SK-N-SH (cell line): ENCODE measurements at regions of chr7 and their contacts with region 1.

Region 1: GRCh38 chr7:24381894-24382505 is 98.0 kb downstream of the NPY start:
- DNase-seq: peak; percentile 74
- H3K4me3 ChIP-seq: no peak overlapping the region
- H3K27ac ChIP-seq: peak overlapping the region in 1 of 2 experiments; percentile 59; a peak in 1 of 4 replicates
- H3K4me1 ChIP-seq: peaks cover 0 to 3% of the 10 kb centered on the region in 2 experiments; a peak in 1 of 4 replicates
- H3K27me3 ChIP-seq: no peaks in the 10 kb centered on the region
- CTCF ChIP-seq: peak; percentile 65
- EP300 ChIP-seq: no peak
- RAD21 ChIP-seq: peak; percentile 95

Region 2: GRCh38 chr7:23893942-23894891 is 487.8 kb before region 1 on chr7:
- CTCF ChIA-PET with region 1: interaction called, 16 read pairs
- POLR2A ChIA-PET with region 1: no interaction called
- DNase-seq: peak; percentile 44
- H3K4me3 ChIP-seq: 0 out of 4 replicates have a peak overlapping the region, but pooled peaks of 1 of the 2 experiments have one; percentile 7
- H3K27ac ChIP-seq: peak overlapping the region; percentile 63 to 82
- H3K4me1 ChIP-seq: peaks cover 23 to 35% of the 10 kb centered on the region in 2 experiments
- H3K27me3 ChIP-seq: no peaks in the 10 kb centered on the region
- CTCF ChIP-seq: no peak
- EP300 ChIP-seq: 0 out of 4 replicates have a peak, but pooled peaks of 1 of the 2 experiments have one; percentile 24
- RAD21 ChIP-seq: no peak

Region 3: GRCh38 chr7:24199978-24200377 is 182.0 kb before region 1 on chr7:
- CTCF ChIA-PET with region 1: interaction called, 20 read pairs
- POLR2A ChIA-PET with region 1: no interaction called
- DNase-seq: peak; percentile 56
- H3K4me3 ChIP-seq: no peak overlapping the region; a peak in 1 of 4 replicates
- H3K27ac ChIP-seq: peak overlapping the region in 1 of 2 experiments; percentile 95; a peak in 2 of 4 replicates
- H3K4me1 ChIP-seq: peaks cover 0 to 44% of the 10 kb centered on the region in 2 experiments; a peak in 3 of 4 replicates
- H3K27me3 ChIP-seq: no peaks in the 10 kb centered on the region
- CTCF ChIP-seq: no peak
- EP300 ChIP-seq: peak; percentile 40 to 98; a peak in 3 of 4 replicates
- RAD21 ChIP-seq: peak; percentile 42

Region 4: GRCh38 chr7:24290004-24290641 is 91.9 kb before region 1 on chr7:
- CTCF ChIA-PET with region 1: interaction called, 42 read pairs
- POLR2A ChIA-PET with region 1: no interaction called
- DNase-seq: peak; percentile 69
- H3K4me3 ChIP-seq: no peak overlapping the region
- H3K27ac ChIP-seq: no peak overlapping the region
- H3K4me1 ChIP-seq: peaks cover 0 to 5% of the 10 kb centered on the region in 2 experiments; a peak in 2 of 4 replicates
- H3K27me3 ChIP-seq: peaks cover 20% of the 10 kb centered on the region
- CTCF ChIP-seq: peak; percentile 51
- EP300 ChIP-seq: no peak
- RAD21 ChIP-seq: peak; percentile 85

Region 5: DNA sequence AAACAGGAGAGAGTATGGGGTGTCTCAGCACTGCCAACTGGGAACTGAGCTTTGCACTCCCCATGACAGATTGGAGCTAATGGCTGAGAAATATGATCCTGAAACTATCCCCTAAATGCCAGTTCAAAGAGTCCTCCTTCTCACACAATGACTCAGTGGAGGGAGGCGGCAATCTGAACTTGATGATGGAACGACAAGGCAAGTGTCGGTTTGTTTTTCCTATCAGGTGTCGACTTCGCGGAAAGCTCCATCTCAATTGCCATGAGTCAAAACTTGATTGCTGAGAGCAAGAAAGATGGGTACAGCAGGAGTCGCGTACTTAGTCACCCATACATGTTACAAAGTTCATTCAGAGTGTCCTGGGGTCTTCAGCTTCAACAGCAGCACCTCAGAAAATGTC is 45.5 kb before region 1 on chr7:
- CTCF ChIA-PET with region 1: interaction called, 11 read pairs
- POLR2A ChIA-PET with region 1: no interaction called
- DNase-seq: no peak
- H3K4me3 ChIP-seq: no peak overlapping the region
- H3K27ac ChIP-seq: no peak overlapping the region
- H3K4me1 ChIP-seq: peaks cover 0 to 9% of the 10 kb centered on the region in 2 experiments; a peak in 2 of 4 replicates
- H3K27me3 ChIP-seq: no peaks in the 10 kb centered on the region
- CTCF ChIP-seq: no peak
- EP300 ChIP-seq: no peak
- RAD21 ChIP-seq: no peak

Region 6: DNA sequence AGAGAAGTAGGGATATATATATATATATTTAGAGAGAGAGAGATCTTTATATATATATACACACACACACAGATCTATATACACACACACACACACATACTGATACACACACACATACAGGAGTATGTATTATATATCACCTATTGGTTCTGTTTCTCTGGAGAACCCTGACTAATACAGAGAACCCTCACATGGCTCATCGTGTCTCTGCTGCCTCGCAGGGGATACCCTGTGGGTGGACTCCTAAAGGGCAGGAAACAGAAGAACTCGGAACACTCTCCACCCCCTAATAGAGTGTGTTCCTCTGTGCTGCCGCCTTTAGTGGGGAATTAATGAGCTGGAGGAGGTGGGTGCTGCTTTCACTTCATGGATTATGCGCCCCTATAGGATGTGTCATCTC is 11.5 kb before region 1 on chr7:
- CTCF ChIA-PET with region 1: interaction called, 19 read pairs
- POLR2A ChIA-PET with region 1: no interaction called
- DNase-seq: no peak
- H3K4me3 ChIP-seq: no peak overlapping the region
- H3K27ac ChIP-seq: no peak overlapping the region
- H3K4me1 ChIP-seq: peaks cover 0 to 7% of the 10 kb centered on the region in 2 experiments; a peak in 1 of 4 replicates
- H3K27me3 ChIP-seq: peaks cover 14% of the 10 kb centered on the region; the same call in 1 of the 2 replicates
- CTCF ChIP-seq: no peak
- EP300 ChIP-seq: no peak
- RAD21 ChIP-seq: no peak

Region 7: DNA sequence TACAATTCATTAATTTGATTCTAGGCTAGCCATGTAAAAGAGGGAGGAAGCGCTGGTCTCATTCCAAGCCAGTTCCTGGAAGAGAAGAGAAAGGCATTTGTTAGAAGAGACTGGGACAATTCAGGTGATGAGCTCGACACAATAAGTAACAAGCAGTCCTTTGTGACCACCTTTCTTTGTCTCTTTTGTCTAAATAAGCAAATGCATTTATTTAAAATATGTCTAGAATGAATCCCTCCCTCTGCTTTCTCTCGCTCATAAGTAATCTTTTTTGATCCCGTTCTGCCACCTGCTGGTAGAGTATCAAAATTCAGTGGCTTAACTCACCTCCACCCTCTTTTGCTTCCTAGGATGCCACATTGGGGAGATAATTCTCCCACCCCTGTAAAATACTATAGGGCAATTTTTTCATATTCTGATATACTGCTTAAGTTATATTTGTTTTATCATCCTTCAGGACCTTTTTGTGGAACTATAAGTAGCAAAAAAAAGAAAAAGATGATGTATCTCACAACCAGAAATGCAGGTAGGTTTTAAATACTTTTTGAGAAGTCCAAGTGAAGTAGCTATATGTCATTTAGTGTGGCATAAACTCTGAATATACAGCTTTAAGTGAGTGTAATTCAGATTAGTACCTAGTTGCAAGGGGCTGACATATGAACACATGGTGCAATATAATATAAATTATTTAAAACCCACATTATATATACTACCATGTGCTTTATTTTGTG is 283.7 kb after region 1 on chr7:
- CTCF ChIA-PET with region 1: interaction called, 13 read pairs
- POLR2A ChIA-PET with region 1: no interaction called
- DNase-seq: peak; percentile 58
- H3K4me3 ChIP-seq: no peak overlapping the region
- H3K27ac ChIP-seq: no peak overlapping the region
- H3K4me1 ChIP-seq: peaks cover 5 to 6% of the 10 kb centered on the region in 2 experiments; a peak in 3 of 4 replicates
- H3K27me3 ChIP-seq: no peaks in the 10 kb centered on the region
- CTCF ChIP-seq: peak; percentile 97
- EP300 ChIP-seq: 0 out of 4 replicates have a peak, but pooled peaks of 1 of the 2 experiments have one; percentile 6
- RAD21 ChIP-seq: peak; percentile 88